Sciatic nerve (tissue), 2 donors: ENCODE measurements at regions of chr1 and their contacts with region 1.

Region 1: DNA sequence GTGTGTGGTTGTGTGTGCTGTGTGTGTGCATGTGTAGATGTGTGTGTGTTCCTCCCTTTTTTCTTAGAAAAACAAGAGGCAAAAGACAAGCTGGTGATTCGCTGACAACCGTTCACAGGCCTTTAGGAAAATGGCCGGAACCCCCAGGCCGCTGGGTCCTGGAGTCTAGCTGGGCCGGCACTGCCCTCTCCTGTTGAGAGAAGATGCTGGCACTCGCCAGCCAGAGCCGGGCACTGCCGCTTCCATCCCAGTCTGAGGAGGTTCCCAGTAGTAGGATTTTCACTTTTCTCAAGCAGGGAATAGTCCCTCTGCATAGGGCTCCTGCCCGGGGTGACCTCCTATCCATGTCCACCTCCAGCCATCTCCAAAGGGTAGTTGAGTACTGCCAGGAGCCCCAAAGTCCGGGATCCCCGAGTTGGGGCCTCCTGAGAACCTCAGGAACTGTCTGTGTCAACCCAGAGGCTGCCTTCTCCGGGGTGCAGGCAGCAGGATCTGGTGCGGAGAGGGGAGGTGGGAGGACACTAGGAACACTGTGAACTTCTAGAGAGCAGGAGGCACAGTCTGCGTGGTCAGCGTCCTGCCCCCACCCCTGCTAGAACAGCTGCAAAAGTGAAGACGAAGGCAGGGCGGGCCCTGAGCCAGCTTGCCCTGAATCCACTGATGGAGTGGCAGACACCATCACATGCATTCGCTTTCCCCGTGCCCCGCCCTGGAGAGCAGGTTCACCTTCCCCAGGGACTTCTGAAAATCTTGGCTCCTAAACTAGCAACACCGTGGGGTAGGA is 44.1 kb upstream of the ARHGEF16 start:
- DNase-seq: peak; percentile 83
- ATAC-seq: peak; percentile 87

Region 2: DNA sequence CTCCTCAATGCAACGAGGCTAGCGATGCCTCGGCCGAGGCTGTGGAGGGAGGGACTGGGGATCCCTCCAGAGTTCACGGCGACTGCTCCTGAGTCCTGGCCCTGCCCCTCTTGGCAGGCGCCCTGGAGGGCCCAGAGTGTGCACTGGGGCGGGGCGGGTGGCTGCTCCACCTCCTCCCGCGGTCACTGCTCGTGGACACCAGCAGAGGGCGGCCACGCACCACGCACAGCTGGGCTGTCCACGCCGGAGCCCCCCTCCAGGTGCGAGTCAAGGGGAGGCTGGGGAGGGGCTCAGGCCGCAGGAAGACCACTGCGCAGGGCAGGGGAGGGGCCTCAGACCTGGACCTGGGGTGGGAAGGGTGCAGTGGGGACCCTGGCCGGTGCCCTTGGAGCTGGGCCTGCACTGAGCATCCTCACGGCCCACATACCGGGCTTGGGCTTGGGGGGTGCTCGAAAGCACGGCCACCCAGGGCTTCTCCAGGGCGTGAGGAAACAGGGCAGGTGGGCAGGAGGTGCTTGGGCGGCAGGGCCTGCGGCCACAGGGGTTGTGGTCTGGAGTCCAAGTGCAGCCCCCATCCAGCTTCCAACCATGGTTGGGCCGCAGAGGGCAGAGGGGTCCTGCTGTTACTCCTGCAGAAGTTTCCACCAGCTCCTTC is 588.2 kb before region 1 on chr1:
- intact Hi-C with region 1: loop called (anchors 10 kb)
- DNase-seq: no peak
- ATAC-seq: peak; percentile 78

Region 3: GRCh38 chr1:3012456-3013291 is 397.7 kb before region 1 on chr1:
- intact Hi-C with region 1: loop called (anchors 5 kb)
- DNase-seq: peak; percentile 83
- ATAC-seq: peak; percentile 78

Region 4: DNA sequence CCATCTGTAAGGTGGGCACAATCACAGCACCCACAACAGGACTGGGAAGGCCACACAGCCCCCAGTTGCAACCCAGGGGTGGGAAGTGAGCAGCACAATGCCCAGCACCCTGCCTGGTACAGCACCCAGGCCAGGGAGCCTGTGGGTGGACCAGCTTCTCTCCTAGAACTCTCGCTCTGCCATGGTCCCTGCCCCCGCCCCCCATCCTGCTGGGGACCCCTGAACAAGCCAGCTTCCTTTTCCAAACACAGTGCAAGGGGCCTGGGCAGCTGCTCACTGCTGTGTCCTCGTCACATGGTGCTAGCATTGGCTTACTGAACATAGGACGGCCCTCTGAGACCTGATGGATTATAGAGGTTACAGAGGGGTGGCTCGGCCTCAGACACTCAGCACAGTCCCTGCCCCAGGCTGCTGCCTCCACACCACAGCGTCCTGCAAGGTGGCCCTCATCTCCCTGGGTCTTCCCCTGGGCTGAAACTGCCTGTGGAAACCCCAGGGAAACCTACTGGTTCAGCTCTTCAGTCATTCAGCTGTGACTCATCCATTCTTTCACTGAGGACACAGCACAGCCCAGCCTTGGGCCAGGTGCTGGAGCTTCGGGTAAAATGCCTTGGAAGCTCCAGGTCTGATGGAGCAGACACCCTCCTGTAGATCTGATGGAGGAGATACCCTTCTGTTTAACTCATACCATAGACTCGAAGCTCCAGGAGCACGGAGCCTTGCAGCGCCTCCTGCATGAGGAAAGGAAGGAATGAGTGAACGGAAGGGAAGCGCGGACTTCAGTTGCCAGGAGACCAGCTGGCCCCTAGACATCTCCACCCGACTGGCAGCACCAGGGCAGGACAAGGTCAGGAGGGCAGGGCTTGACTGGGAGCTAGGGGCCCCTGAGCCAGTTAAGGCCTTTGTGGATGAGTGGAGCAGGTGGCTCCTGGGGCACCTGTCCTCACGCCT is 349.5 kb before region 1 on chr1:
- intact Hi-C with region 1: loop called (anchors 5 kb)
- DNase-seq: peak; percentile 43
- ATAC-seq: peak; percentile 6

Region 5: GRCh38 chr1:3283849-3284248 is 126.5 kb before region 1 on chr1:
- intact Hi-C with region 1: loop called (anchors 10 kb)
- DNase-seq: peak; percentile 76
- ATAC-seq: peak; percentile 58